ENCODE measurements at regions of chr2 and their contacts with region 1.

Region 1: GRCh38 chr2:197992482-197993133 is 188.2 kb downstream of the PLCL1 start:
- DNase-seq: no peak
- ATAC-seq: no peak
- H3K4me3 ChIP-seq: no peak overlapping the region
- H3K27ac ChIP-seq: no peak overlapping the region
- H3K4me1 ChIP-seq: no peaks in the 10 kb centered on the region
- H3K27me3 ChIP-seq: no peaks in the 10 kb centered on the region
- CTCF ChIP-seq: no peak
- POLR2A ChIP-seq: no peak
- RAD21 ChIP-seq: no peak

Region 2: GRCh38 chr2:197793456-197793855 is 199.2 kb before region 1 on chr2:
- CTCF ChIA-PET with region 1: no interaction called
- POLR2A ChIA-PET with region 1: no interaction called
- dilution Hi-C with region 1: no loop called
- in situ Hi-C with region 1: no loop called
- intact Hi-C with region 1: no loop called
- DNase-seq: no peak
- ATAC-seq: no peak
- H3K4me3 ChIP-seq: no peak overlapping the region
- H3K27ac ChIP-seq: no peak overlapping the region
- H3K4me1 ChIP-seq: no peaks in the 10 kb centered on the region
- H3K27me3 ChIP-seq: peaks cover 4% of the 10 kb centered on the region
- CTCF ChIP-seq: no peak
- POLR2A ChIP-seq: no peak
- RAD21 ChIP-seq: no peak

Region 3: GRCh38 chr2:198053776-198054698 is 61.4 kb after region 1 on chr2:
- CTCF ChIA-PET with region 1: no interaction called
- POLR2A ChIA-PET with region 1: no interaction called
- dilution Hi-C with region 1: no loop called
- in situ Hi-C with region 1: no loop called
- intact Hi-C with region 1: no loop called
- DNase-seq: peak; percentile 37
- ATAC-seq: peak; percentile 68
- H3K4me3 ChIP-seq: no peak overlapping the region
- H3K27ac ChIP-seq: no peak overlapping the region
- H3K4me1 ChIP-seq: no peaks in the 10 kb centered on the region
- H3K27me3 ChIP-seq: no peaks in the 10 kb centered on the region
- CTCF ChIP-seq: peak; percentile 54
- POLR2A ChIP-seq: no peak
- RAD21 ChIP-seq: peak; percentile 51

Region 4: GRCh38 chr2:198182092-198182491 is 189.5 kb after region 1 on chr2:
- CTCF ChIA-PET with region 1: no interaction called
- POLR2A ChIA-PET with region 1: no interaction called
- dilution Hi-C with region 1: no loop called
- in situ Hi-C with region 1: no loop called
- intact Hi-C with region 1: loop called (anchors 5 kb)
- DNase-seq: no peak
- ATAC-seq: no peak
- H3K4me3 ChIP-seq: no peak overlapping the region
- H3K27ac ChIP-seq: no peak overlapping the region
- H3K4me1 ChIP-seq: no peaks in the 10 kb centered on the region
- H3K27me3 ChIP-seq: no peaks in the 10 kb centered on the region
- CTCF ChIP-seq: no peak
- POLR2A ChIP-seq: no peak
- RAD21 ChIP-seq: no peak